OCI-LY7 (cell line): ENCODE measurements at regions of chr10 and their contacts with region 1.

Region 1: GRCh38 chr10:43939939-43940820 is 291.5 kb upstream of the ZNF32 start:
- DNase-seq: peak; percentile 45
- H3K4me3 ChIP-seq: peak overlapping the region; percentile 29
- H3K27ac ChIP-seq: peak overlapping the region; percentile 90
- H3K4me1 ChIP-seq: peaks cover 72% of the 10 kb centered on the region
- CTCF ChIP-seq: no peak

Region 2: GRCh38 chr10:43361986-43362839 is 578.0 kb before region 1 on chr10:
- CTCF ChIA-PET with region 1: no interaction called
- POLR2A ChIA-PET with region 1: no interaction called
- intact Hi-C with region 1: no loop called
- DNase-seq: no peak
- H3K4me3 ChIP-seq: no peak overlapping the region
- H3K27ac ChIP-seq: no peak overlapping the region
- H3K4me1 ChIP-seq: no peaks in the 10 kb centered on the region
- CTCF ChIP-seq: no peak

Region 3: DNA sequence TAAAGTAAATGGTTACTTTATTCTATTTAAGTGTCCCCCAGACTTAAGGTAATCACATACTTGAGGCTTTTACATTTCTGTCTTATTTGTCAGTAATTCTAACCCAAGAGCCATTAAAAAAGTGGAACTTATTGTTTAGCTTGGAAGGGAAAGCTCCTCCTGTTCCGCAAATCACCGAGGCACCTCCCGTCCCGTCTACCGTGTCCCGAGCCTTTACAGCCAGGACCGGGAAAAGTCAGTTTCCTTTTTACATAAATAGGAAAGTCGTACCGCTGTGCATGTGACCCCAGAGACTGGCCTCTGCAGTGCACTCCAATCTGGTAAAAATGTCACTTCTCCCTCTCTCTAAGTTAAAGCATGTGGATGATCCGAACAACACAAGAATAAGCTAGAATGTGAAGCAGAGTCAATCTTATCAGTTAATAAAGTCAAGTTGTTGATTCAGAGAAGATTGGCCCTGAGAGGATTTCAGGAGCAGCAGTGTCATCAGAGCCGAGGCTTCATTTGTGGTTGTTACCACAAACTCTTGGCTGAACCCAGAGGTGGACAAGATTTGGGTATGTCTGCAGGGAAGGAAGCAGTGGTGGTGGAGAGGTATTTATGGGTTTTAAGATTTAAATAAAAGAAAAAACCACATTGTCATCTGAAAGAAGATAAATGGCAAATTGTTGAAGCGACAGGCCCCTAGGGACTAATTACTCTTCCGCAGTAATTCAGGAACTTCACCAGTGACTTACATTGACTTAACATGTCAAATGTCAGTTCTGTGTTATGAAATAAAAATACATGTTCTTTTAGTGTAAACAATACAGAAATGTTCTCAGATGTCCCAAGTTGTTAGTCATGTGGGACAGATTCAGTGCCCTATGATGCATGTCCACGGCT is 25.1 kb after region 1 on chr10:
- CTCF ChIA-PET with region 1: interaction called, 3 read pairs
- POLR2A ChIA-PET with region 1: interaction called, 6 read pairs
- intact Hi-C with region 1: loop called (anchors 1 kb)
- DNase-seq: peak; percentile 67
- H3K4me3 ChIP-seq: peak overlapping the region; percentile 20
- H3K27ac ChIP-seq: no peak overlapping the region
- H3K4me1 ChIP-seq: peaks cover 28% of the 10 kb centered on the region
- CTCF ChIP-seq: no peak